ENCODE measurements at regions of chr22 and their contacts with region 1.

Region 1: GRCh38 chr22:46798366-46799350 is 36.2 kb downstream of the TBC1D22A start:
- DNase-seq: peak; percentile 74
- ATAC-seq: peak; percentile 78
- H3K4me3 ChIP-seq: no peak overlapping the region
- H3K4me3 Mint-ChIP-seq: no peak overlapping the region
- H3K27ac ChIP-seq: peak overlapping the region in 1 of 2 donors; percentile 9
- H3K27ac Mint-ChIP-seq: peak overlapping the region; percentile 83
- H3K4me1 ChIP-seq: peaks cover 7 to 8% of the 10 kb centered on the region in 2 donors
- H3K4me1 Mint-ChIP-seq: peaks cover 47% of the 10 kb centered on the region
- H3K27me3 ChIP-seq: no peaks in the 10 kb centered on the region
- H3K27me3 Mint-ChIP-seq: no peaks in the 10 kb centered on the region
- CTCF ChIP-seq: peak; percentile 79

Region 2: DNA sequence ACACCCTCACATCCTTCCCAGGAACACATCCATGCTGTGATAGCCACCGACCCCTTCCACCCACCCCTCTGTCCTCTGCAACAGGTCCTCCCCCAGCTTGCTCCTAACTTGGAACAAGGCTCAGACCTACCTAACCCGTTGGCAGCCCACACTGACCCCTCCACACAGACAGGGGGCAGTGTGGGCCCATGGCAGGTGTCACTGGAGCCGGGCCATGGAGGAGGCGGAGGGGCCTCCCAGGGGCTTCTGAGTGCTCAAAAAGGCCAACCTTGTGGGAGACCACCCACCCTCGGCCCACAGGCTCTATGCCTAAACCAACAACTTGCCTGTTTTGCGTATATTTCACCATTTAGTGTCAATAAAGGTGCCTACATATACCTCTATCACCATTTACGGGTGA is 117.6 kb before region 1 on chr22:
- CTCF ChIA-PET with region 1: interaction called, 11 read pairs
- POLR2A ChIA-PET with region 1: interaction called, 5 read pairs
- intact Hi-C with region 1: no loop called
- DNase-seq: peak; percentile 50
- ATAC-seq: no peak
- H3K4me3 ChIP-seq: no peak overlapping the region
- H3K4me3 Mint-ChIP-seq: no peak overlapping the region
- H3K27ac ChIP-seq: no peak overlapping the region
- H3K27ac Mint-ChIP-seq: no peak overlapping the region
- H3K4me1 ChIP-seq: peaks cover 30 to 34% of the 10 kb centered on the region in 2 donors
- H3K4me1 Mint-ChIP-seq: peaks cover 29% of the 10 kb centered on the region
- H3K27me3 ChIP-seq: peaks cover 0 to 20% (median 0%) of the 10 kb centered on the region in 4 experiments
- H3K27me3 Mint-ChIP-seq: peaks cover 4% of the 10 kb centered on the region
- CTCF ChIP-seq: peak; percentile 47

Region 3: GRCh38 chr22:46769191-46769675 is 29.4 kb before region 1 on chr22:
- CTCF ChIA-PET with region 1: interaction called, 468 read pairs
- POLR2A ChIA-PET with region 1: interaction called, 3 read pairs
- intact Hi-C with region 1: loop called (anchors 1 kb)
- DNase-seq: peak; percentile 75
- ATAC-seq: peak; percentile 43
- H3K4me3 ChIP-seq: peak overlapping the region in 3 of 5 experiments; percentile 15 to 60 (median 27)
- H3K4me3 Mint-ChIP-seq: peak overlapping the region; percentile 91
- H3K27ac ChIP-seq: peak overlapping the region; percentile 92 to 97
- H3K27ac Mint-ChIP-seq: peak overlapping the region; percentile 99
- H3K4me1 ChIP-seq: peaks cover 87 to 93% of the 10 kb centered on the region in 2 donors
- H3K4me1 Mint-ChIP-seq: peaks cover 86% of the 10 kb centered on the region
- H3K27me3 ChIP-seq: no peaks in the 10 kb centered on the region
- H3K27me3 Mint-ChIP-seq: no peaks in the 10 kb centered on the region
- CTCF ChIP-seq: no peak

Region 4: DNA sequence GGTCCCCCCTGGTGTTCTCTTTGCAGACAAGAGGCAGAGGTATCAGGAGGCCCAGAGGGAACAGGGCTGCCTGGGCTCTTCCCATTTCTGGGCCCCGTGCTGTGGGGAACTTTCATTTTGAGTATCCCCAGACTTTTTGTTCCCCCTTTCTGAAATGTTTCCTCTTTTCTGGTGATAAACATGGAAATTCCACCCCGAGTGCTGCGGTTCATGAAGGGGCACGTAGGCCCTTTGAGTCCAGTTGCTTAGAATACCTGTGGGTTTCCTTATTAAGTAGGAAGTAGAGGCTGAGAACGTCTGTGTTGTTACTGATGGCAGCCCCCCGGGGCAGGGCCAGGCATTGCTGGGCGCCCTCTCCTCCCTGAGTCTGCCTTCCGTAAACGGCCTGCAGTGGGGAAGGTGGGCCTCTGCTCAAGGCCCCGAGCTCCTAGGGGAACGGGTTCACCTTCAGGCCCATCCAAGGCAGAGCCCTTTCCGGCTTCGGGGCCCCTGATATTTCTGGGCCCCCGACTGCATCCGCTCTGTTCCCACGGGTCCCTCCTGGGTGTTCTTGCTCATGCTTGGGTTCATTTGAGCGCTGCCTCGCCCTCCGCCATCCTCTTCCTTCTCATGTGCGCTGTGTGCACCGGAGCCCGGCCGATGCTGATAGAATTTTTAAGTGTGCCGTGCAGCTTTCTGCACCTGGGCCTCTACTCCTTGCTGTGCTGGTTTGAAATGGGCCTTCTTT is 24.2 kb before region 1 on chr22:
- CTCF ChIA-PET with region 1: interaction called, 61 read pairs
- POLR2A ChIA-PET with region 1: no interaction called
- intact Hi-C with region 1: no loop called
- DNase-seq: peak; percentile 84
- ATAC-seq: peak; percentile 64
- H3K4me3 ChIP-seq: peak overlapping the region; percentile 21 to 49 (median 37)
- H3K4me3 Mint-ChIP-seq: peak overlapping the region; percentile 79
- H3K27ac ChIP-seq: peak overlapping the region; percentile 87 to 91
- H3K27ac Mint-ChIP-seq: peak overlapping the region; percentile 93
- H3K4me1 ChIP-seq: peaks cover 93% of the 10 kb centered on the region in 2 donors
- H3K4me1 Mint-ChIP-seq: peaks cover 89% of the 10 kb centered on the region
- H3K27me3 ChIP-seq: no peaks in the 10 kb centered on the region
- H3K27me3 Mint-ChIP-seq: no peaks in the 10 kb centered on the region
- CTCF ChIP-seq: no peak

Region 5: GRCh38 chr22:46783721-46784120 is 14.9 kb before region 1 on chr22:
- CTCF ChIA-PET with region 1: interaction called, 61 read pairs
- POLR2A ChIA-PET with region 1: no interaction called
- intact Hi-C with region 1: no loop called
- DNase-seq: no peak
- ATAC-seq: no peak
- H3K4me3 ChIP-seq: no peak overlapping the region
- H3K4me3 Mint-ChIP-seq: no peak overlapping the region
- H3K27ac ChIP-seq: no peak overlapping the region
- H3K27ac Mint-ChIP-seq: no peak overlapping the region
- H3K4me1 ChIP-seq: peaks cover 49 to 50% of the 10 kb centered on the region in 2 donors
- H3K4me1 Mint-ChIP-seq: peaks cover 83% of the 10 kb centered on the region
- H3K27me3 ChIP-seq: no peaks in the 10 kb centered on the region
- H3K27me3 Mint-ChIP-seq: no peaks in the 10 kb centered on the region
- CTCF ChIP-seq: no peak

Region 6: DNA sequence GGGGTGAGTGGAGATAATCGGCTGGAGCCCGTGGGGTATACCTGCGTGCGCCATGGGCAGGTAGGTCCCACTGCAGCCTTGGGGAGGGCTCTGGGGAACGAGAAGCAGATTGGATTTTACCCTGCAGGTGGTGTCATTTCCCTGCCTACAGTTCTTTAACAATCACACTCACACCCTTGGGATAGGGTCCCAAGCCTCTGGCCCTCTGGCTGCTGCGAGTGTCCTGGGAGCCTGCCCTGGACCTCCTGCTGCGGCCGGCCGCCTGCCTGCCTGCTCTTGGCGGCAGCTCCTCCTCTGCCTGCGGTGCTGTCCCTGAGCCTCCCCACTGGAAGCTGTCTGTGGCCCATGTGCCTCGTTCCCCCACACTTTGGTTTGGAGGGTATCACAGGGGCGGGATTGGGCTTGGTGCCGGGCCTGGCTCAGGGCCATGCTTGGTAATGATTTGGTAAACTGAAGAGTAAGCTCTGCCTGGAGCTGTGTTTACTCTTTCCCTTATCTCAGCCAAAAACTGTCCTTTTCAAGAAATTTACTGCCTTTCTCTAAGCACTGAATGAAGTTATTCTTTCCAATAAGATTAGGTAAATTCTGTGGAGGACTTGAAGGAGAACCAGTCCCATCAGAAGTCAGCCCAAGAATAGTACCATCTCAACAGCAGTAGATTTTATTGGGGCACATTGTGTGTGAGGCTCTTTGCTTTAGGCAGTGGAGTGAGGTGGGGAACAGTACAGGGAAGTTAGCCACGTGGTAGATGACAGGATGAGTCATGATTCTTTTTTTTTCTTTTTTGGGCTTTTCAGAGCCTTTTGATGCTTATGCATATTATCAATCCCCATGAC is 17.5 kb after region 1 on chr22:
- CTCF ChIA-PET with region 1: interaction called, 28 read pairs
- POLR2A ChIA-PET with region 1: interaction called, 3 read pairs
- intact Hi-C with region 1: no loop called
- DNase-seq: no peak
- ATAC-seq: no peak
- H3K4me3 ChIP-seq: no peak overlapping the region
- H3K4me3 Mint-ChIP-seq: no peak overlapping the region
- H3K27ac ChIP-seq: no peak overlapping the region
- H3K27ac Mint-ChIP-seq: peak overlapping the region; percentile 17
- H3K4me1 ChIP-seq: peaks cover 3 to 10% of the 10 kb centered on the region in 2 donors
- H3K4me1 Mint-ChIP-seq: peaks cover 62% of the 10 kb centered on the region
- H3K27me3 ChIP-seq: no peaks in the 10 kb centered on the region
- H3K27me3 Mint-ChIP-seq: no peaks in the 10 kb centered on the region
- CTCF ChIP-seq: no peak

Measured in B cell (primary cell).